ENCODE measurements at regions of chr1 and their contacts with region 1.

Region 1: GRCh38 chr1:8913111-8913856 is 32.4 kb upstream of the CA6 start:
- DNase-seq: no peak
- H3K4me3 Mint-ChIP-seq: no peak overlapping the region
- H3K27ac Mint-ChIP-seq: no peak overlapping the region
- H3K4me1 Mint-ChIP-seq: peaks cover 6% of the 10 kb centered on the region
- H3K27me3 Mint-ChIP-seq: no peaks in the 10 kb centered on the region

Region 2: GRCh38 chr1:9058465-9058864 is 145.2 kb after region 1 on chr1:
- CTCF ChIA-PET with region 1: no interaction called
- intact Hi-C with region 1: no loop called
- DNase-seq: no peak
- H3K4me3 Mint-ChIP-seq: no peak overlapping the region
- H3K27ac Mint-ChIP-seq: no peak overlapping the region
- H3K4me1 Mint-ChIP-seq: no peaks in the 10 kb centered on the region
- H3K27me3 Mint-ChIP-seq: no peaks in the 10 kb centered on the region

Region 3: GRCh38 chr1:9101510-9102146 is 188.3 kb after region 1 on chr1:
- CTCF ChIA-PET with region 1: no interaction called
- intact Hi-C with region 1: loop called (anchors 1 kb)
- DNase-seq: peak; percentile 62
- H3K4me3 Mint-ChIP-seq: no peak overlapping the region
- H3K27ac Mint-ChIP-seq: no peak overlapping the region
- H3K4me1 Mint-ChIP-seq: no peaks in the 10 kb centered on the region
- H3K27me3 Mint-ChIP-seq: no peaks in the 10 kb centered on the region

Region 4: GRCh38 chr1:9766759-9767442 is 853.6 kb after region 1 on chr1:
- CTCF ChIA-PET with region 1: no interaction called
- intact Hi-C with region 1: no loop called
- DNase-seq: no peak
- H3K4me3 Mint-ChIP-seq: no peak overlapping the region
- H3K27ac Mint-ChIP-seq: no peak overlapping the region
- H3K4me1 Mint-ChIP-seq: peaks cover 10% of the 10 kb centered on the region
- H3K27me3 Mint-ChIP-seq: no peaks in the 10 kb centered on the region

Measured in activated naive CD4-positive, alpha-beta T cell treated with anti-CD3 and anti-CD28 coated beads for 36 hours (primary cell).